Activated CD4-positive, alpha-beta T cell treated with anti-CD3 and anti-CD28 coated beads for 36 hours (primary cell): ENCODE measurements at regions of chr1 and their contacts with region 1.

Region 1: GRCh38 chr1:224454397-224455066 is 19.9 kb upstream of the WDR26 start:
- DNase-seq: no peak
- ATAC-seq: peak; percentile 37
- H3K4me3 Mint-ChIP-seq: no peak overlapping the region
- H3K27ac Mint-ChIP-seq: no peak overlapping the region
- H3K4me1 Mint-ChIP-seq: peaks cover 19% of the 10 kb centered on the region
- H3K27me3 Mint-ChIP-seq: no peaks in the 10 kb centered on the region

Region 2: DNA sequence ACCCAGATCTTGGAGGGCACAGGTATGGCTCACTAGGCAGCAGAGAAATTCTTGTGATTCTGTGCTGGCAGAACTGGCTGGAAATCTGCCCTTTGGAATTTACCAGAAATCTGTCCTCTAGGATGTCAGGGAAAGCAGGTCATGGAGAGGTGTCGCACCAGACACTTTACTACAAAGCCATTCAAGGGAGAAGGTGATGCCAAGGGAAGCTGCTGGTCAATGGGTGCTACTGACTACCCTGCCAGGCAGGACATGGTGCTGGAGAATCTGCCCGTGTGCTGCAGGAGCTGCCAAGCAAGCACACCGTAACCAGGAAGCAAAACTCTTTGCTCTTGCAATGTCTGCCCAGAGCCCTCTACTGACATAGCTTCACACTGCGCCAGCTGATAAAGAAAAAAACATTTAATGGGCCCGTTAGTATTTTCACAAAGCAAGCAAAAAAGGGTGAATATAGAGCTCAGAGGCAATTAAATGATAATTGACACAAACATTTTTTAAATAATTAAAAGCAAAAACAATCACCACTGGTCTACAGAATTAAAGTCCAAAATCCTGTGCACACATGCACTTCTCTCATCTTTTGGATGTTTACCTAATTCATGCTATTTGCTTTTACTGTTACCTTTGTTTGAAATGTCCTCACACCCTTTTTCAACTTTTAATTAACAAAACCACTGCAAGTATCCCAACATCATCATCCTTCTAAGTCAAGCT is 347.8 kb before region 1 on chr1:
- CTCF ChIA-PET with region 1: interaction called, 4 read pairs
- POLR2A ChIA-PET with region 1: interaction called, 12 read pairs
- intact Hi-C with region 1: no loop called
- DNase-seq: peak; percentile 30
- ATAC-seq: peak; percentile 83
- H3K4me3 Mint-ChIP-seq: no peak overlapping the region
- H3K27ac Mint-ChIP-seq: no peak overlapping the region
- H3K4me1 Mint-ChIP-seq: no peaks in the 10 kb centered on the region
- H3K27me3 Mint-ChIP-seq: peaks cover 11% of the 10 kb centered on the region

Region 3: DNA sequence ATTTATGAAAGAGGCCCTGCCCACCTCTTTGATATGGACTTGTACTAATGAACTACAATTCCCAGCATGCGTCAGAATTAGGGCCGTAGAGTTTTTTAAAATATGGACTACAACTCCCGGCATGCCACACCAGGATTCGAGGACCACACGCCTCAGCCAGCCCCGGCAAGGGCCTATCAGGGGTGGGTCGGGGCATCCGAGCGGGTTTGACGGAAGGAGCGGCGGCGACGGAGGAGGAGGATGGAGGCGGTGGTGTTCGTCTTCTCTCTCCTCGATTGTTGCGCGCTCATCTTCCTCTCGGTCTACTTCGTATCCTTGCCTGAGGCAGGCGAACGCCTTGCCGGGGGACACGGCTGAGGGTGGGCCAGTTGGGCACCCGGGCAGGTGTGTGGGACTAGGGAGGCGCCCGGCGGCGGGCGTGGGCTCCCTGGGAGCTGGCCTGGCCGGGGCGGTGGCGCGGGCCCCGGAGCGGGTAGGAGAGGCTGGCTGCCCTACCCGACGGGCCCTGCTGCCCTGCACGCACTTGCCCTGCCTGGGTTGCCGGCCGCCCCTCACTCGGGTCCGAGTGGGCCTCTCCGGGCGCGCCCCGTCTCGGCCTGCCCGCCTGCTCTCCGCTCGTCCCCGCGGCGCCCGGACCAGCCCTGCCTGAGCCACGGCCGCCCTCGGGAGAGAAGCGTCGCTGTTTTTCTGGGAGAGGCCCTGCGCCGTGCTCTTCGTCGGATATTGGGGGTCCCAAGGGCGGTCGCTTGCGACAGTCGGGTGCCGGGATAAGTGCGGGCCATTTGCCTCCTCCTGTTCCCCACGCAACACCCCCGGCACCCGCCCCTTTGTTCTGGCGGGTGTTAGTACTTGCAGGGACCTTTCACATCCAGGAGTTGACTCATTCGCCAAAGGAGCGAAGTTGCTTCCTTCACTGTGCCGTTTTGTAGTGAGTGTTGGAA is 97.6 kb before region 1 on chr1 and contains the start of gene CNIH4:
- CTCF ChIA-PET with region 1: interaction called, 6 read pairs
- POLR2A ChIA-PET with region 1: no interaction called
- intact Hi-C with region 1: loop called in 1 of 2 experiments (anchors 1 kb)
- DNase-seq: peak; percentile 95
- ATAC-seq: peak; percentile 98
- H3K4me3 Mint-ChIP-seq: peak within 1 kb of the TSS; percentile 80
- H3K27ac Mint-ChIP-seq: peak within 1 kb of the TSS; percentile 89
- H3K4me1 Mint-ChIP-seq: peaks cover 30% of the 10 kb centered on the region
- H3K27me3 Mint-ChIP-seq: no peaks in the 10 kb centered on the region
- total RNA-seq, gene CNIH4: 29.9 to 49.6 TPM

Region 4: DNA sequence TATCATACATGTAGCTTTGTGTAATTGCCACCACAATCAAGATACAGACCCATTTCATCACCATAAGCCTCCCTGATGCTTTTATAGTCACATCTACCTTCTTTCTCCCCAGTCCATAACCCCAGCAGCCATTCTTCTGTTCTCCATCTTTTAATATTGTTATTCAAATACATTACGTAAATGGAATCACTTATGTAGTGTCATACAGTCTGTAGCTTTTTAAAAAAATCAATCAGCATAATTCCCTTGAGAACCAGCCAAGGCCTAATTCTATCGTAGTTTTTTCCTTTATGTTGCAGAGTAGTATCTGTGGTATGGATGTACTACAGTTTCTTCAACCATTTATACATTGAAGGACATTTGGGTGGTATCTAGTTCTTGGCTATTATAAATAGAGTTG is 11.6 kb after region 1 on chr1:
- CTCF ChIA-PET with region 1: interaction called, 18 read pairs
- POLR2A ChIA-PET with region 1: no interaction called
- intact Hi-C with region 1: no loop called
- DNase-seq: no peak
- ATAC-seq: no peak
- H3K4me3 Mint-ChIP-seq: no peak overlapping the region
- H3K27ac Mint-ChIP-seq: no peak overlapping the region
- H3K4me1 Mint-ChIP-seq: peaks cover 13% of the 10 kb centered on the region
- H3K27me3 Mint-ChIP-seq: no peaks in the 10 kb centered on the region